Sciatic nerve (tissue), 2 donors: ENCODE measurements at regions of chr1 and their contacts with region 1.

Region 1: GRCh38 chr1:231357831-231358354 is 19.8 kb downstream of the SPRTN start:
- DNase-seq: no peak
- ATAC-seq: peak; percentile 85

Region 2: GRCh38 chr1:231603598-231604275 is 245.8 kb after region 1 on chr1:
- intact Hi-C with region 1: loop called (anchors 5 kb)
- DNase-seq: no peak
- ATAC-seq: peak; percentile 75